Caco-2 (cell line): ENCODE measurements at regions of chr7 and their contacts with region 1.

Region 1: DNA sequence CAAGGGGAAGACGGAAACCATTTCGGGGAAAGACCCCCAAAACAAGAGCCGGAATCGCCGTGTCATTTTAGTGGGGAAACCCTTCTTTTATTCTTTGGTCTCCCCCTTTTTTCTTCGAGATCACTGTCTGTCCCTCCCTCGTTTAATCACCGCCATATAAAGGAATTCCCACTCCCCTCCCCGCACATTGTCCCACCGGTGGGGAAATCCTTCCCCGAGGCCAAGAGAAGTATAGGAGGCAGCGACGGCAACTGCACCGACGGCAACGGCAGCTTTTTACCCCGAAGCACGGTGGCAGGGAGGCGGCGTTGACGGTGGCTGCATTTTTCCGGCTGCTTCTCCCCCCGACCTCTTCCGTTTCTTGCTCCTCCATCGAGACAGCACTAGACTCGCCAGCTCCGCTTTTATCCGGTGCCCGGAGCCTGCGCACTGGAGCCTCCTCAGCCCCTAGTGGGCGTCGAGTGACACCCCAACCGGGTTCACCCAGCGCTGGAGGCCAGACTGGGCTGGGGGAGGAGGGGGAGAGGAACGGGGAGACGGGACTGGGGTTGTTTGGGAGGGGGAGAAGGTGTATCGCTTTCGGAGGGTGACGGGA is 687 bp upstream of the KMT2E start:
- DNase-seq: peak; percentile 96
- H3K4me3 ChIP-seq: peak overlapping the region; percentile 100
- H3K4me3 Mint-ChIP-seq: peak overlapping the region; percentile 88
- H3K27ac Mint-ChIP-seq: peak overlapping the region; percentile 100
- H3K4me1 ChIP-seq: peaks cover 38% of the 10 kb centered on the region
- H3K4me1 Mint-ChIP-seq: peaks cover 22% of the 10 kb centered on the region
- H3K27me3 ChIP-seq: no peaks in the 10 kb centered on the region
- H3K27me3 Mint-ChIP-seq: no peaks in the 10 kb centered on the region
- CTCF ChIP-seq: peak; percentile 64 to 67

Region 2: GRCh38 chr7:104895522-104896236 is 117.6 kb before region 1 on chr7:
- CTCF ChIA-PET with region 1: no interaction called
- POLR2A ChIA-PET with region 1: no interaction called
- intact Hi-C with region 1: no loop called
- DNase-seq: no peak
- H3K4me3 ChIP-seq: no peak overlapping the region
- H3K4me3 Mint-ChIP-seq: no peak overlapping the region
- H3K27ac Mint-ChIP-seq: no peak overlapping the region
- H3K4me1 ChIP-seq: no peaks in the 10 kb centered on the region
- H3K4me1 Mint-ChIP-seq: no peaks in the 10 kb centered on the region
- H3K27me3 ChIP-seq: no peaks in the 10 kb centered on the region
- H3K27me3 Mint-ChIP-seq: no peaks in the 10 kb centered on the region
- CTCF ChIP-seq: no peak

Region 3: DNA sequence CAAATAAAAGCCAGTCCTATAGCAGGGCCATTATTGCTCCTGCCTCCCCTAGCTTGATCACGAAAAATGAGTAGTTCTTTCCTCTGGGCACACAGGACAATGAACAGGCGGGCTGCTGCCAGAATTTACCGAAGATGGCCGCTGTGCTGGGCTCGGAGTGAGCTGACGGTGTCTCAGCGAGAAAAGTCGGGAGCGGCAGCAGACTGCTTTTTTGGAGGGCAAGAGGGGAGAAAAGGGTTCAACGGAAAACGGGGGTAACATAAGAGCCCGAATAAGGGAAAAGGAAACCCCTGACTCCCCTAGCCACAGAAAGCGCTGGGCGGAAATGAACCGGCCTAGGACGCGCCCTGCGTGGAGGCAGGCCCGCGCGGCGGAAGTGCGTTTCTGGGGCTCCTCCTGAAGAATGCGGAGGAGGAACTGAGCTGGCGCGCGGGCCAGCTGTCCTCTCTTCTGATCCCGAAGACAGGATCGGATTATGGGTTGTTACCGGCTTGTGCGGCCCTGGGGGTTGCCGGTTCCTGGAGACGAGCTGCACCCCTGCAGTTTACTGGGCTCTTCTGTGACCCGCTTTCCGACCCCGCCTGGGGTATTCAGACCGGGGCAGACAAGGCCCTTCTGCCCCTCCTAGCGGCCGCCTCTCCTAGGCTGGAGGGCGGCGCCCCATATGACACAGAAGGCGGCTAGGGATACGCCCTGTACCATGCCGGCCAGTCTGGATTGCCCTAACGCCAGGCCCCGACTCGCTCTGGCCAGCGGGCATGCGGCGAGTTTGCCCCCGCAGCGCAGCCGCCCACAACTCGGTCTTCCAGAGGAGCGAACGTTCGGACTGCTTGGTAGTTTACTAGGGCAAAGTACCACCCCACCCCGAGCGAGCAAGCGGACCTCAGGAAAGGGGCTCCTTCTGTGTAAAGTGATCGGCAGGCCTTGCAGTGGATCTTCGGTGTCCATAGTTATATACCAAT is 29.5 kb before region 1 on chr7:
- CTCF ChIA-PET with region 1: interaction called, 15 read pairs
- POLR2A ChIA-PET with region 1: interaction called, 14 read pairs
- intact Hi-C with region 1: loop called (anchors 1 kb)
- DNase-seq: peak; percentile 88 to 90
- H3K4me3 ChIP-seq: peak overlapping the region; percentile 41
- H3K4me3 Mint-ChIP-seq: peak overlapping the region; percentile 88
- H3K27ac Mint-ChIP-seq: peak overlapping the region; percentile 99
- H3K4me1 ChIP-seq: peaks cover 55% of the 10 kb centered on the region
- H3K4me1 Mint-ChIP-seq: peaks cover 25% of the 10 kb centered on the region
- H3K27me3 ChIP-seq: no peaks in the 10 kb centered on the region
- H3K27me3 Mint-ChIP-seq: no peaks in the 10 kb centered on the region
- CTCF ChIP-seq: peak in 1 of 2 experiments; percentile 72

Region 4: DNA sequence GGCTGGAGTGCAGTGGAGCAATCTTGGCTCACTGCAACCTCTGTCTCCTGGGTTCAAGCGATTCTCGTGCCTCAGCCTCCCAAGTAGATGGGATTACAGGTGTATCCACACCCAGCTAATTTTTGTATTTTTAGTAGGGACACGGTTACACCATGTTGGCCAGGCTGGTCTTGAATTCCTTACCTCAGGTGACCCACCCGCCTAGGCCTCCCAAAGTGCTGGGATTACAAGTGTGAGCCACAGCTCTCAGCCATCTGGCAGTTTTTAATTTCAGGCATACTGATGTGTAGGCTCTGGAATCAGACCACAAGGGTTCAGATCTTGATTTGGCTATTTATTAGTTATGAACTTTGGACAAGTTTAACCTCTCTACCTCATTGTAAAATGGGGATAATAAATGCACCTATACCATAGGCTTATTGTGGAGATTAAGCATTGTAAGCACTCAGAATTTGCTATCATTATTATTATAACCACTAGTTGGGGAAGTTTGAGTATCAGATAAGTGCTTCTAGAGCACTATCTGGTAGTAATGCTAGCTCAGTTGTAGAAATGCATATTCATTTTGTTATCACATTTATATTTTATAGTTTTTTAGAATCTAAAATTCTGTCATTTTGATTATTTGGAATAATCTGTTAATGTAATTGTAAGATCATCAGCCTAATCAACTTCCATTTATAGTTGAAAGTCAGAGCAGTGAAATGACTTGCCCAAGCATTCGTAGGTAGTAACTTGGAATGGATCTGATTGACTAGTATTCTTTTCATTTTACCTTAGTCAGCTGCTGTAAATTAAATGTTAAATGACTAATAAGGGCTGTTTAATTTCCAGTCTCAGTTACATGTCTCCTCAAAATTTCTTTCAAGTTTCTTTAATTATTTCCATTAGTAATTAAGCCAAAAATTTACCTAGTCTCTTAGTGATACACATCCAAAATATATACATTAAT is 23.2 kb after region 1 on chr7:
- CTCF ChIA-PET with region 1: no interaction called
- POLR2A ChIA-PET with region 1: interaction called, 10 read pairs
- intact Hi-C with region 1: loop called (anchors 2 kb)
- DNase-seq: no peak
- H3K4me3 ChIP-seq: no peak overlapping the region
- H3K4me3 Mint-ChIP-seq: no peak overlapping the region
- H3K27ac Mint-ChIP-seq: no peak overlapping the region
- H3K4me1 ChIP-seq: 0 out of 2 replicates have a peak, but pooled peaks cover 6% of the 10 kb centered on the region
- H3K4me1 Mint-ChIP-seq: no peaks in the 10 kb centered on the region
- H3K27me3 ChIP-seq: no peaks in the 10 kb centered on the region
- H3K27me3 Mint-ChIP-seq: no peaks in the 10 kb centered on the region
- CTCF ChIP-seq: no peak

Region 5: DNA sequence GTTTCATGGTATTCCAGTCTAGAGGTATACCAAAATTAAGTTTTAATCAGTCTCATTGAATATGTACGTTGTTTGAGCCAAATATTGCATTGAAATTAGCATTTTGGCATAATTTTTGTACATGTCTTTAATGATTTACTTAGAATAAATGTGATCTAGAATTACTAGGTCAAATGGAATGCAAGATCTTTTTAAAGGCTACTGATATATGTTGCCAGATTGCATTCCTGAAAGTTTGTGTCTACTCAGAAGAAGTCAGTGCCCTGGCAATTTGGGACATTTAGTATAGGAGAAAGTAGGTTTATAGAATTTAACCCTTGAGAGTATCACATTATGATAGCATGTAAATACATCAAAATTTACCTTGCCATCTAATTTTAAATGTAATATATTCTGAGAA is 33.1 kb after region 1 on chr7:
- CTCF ChIA-PET with region 1: no interaction called
- POLR2A ChIA-PET with region 1: interaction called, 4 read pairs
- intact Hi-C with region 1: loop called (anchors 2 kb)
- DNase-seq: no peak
- H3K4me3 ChIP-seq: no peak overlapping the region
- H3K4me3 Mint-ChIP-seq: no peak overlapping the region
- H3K27ac Mint-ChIP-seq: peak overlapping the region; percentile 23
- H3K4me1 ChIP-seq: peaks cover 35% of the 10 kb centered on the region
- H3K4me1 Mint-ChIP-seq: peaks cover 40% of the 10 kb centered on the region
- H3K27me3 ChIP-seq: no peaks in the 10 kb centered on the region
- H3K27me3 Mint-ChIP-seq: no peaks in the 10 kb centered on the region
- CTCF ChIP-seq: no peak

Region 6: GRCh38 chr7:105055621-105056020 is 42.3 kb after region 1 on chr7:
- CTCF ChIA-PET with region 1: no interaction called
- POLR2A ChIA-PET with region 1: no interaction called
- intact Hi-C with region 1: loop called (anchors 1 kb)
- DNase-seq: no peak
- H3K4me3 ChIP-seq: no peak overlapping the region
- H3K4me3 Mint-ChIP-seq: no peak overlapping the region
- H3K27ac Mint-ChIP-seq: no peak overlapping the region
- H3K4me1 ChIP-seq: no peaks in the 10 kb centered on the region
- H3K4me1 Mint-ChIP-seq: peaks cover 15% of the 10 kb centered on the region
- H3K27me3 ChIP-seq: no peaks in the 10 kb centered on the region
- H3K27me3 Mint-ChIP-seq: no peaks in the 10 kb centered on the region
- CTCF ChIP-seq: no peak